ENCODE measurements at regions of chr5 and their contacts with region 1.

Region 1: GRCh38 chr5:176700239-176700847 is 53.1 kb downstream of the TSPAN17 start:
- DNase-seq: peak; percentile 85
- H3K4me3 ChIP-seq: no peak overlapping the region
- H3K27ac ChIP-seq: no peak overlapping the region
- H3K4me1 ChIP-seq: no peaks in the 10 kb centered on the region; a peak in 1 of 4 replicates
- H3K27me3 ChIP-seq: peaks cover 9% of the 10 kb centered on the region
- CTCF ChIP-seq: peak; percentile 31
- EP300 ChIP-seq: no peak
- RAD21 ChIP-seq: peak; percentile 79

Region 2: GRCh38 chr5:176466245-176466871 is 234.0 kb before region 1 on chr5:
- CTCF ChIA-PET with region 1: no interaction called
- POLR2A ChIA-PET with region 1: no interaction called
- DNase-seq: no peak
- H3K4me3 ChIP-seq: no peak overlapping the region
- H3K27ac ChIP-seq: peak overlapping the region in 1 of 2 experiments; percentile 35; a peak in 2 of 4 replicates
- H3K4me1 ChIP-seq: no peaks in the 10 kb centered on the region
- H3K27me3 ChIP-seq: no peaks in the 10 kb centered on the region
- CTCF ChIP-seq: no peak
- EP300 ChIP-seq: no peak
- RAD21 ChIP-seq: no peak

Region 3: GRCh38 chr5:176682016-176682531 is 18.3 kb before region 1 on chr5:
- CTCF ChIA-PET with region 1: interaction called, 12 read pairs
- POLR2A ChIA-PET with region 1: no interaction called
- DNase-seq: no peak
- H3K4me3 ChIP-seq: no peak overlapping the region
- H3K27ac ChIP-seq: no peak overlapping the region
- H3K4me1 ChIP-seq: no peaks in the 10 kb centered on the region
- H3K27me3 ChIP-seq: no peaks in the 10 kb centered on the region; the same call in 1 of the 2 replicates
- CTCF ChIP-seq: no peak
- EP300 ChIP-seq: no peak
- RAD21 ChIP-seq: no peak

Region 4: GRCh38 chr5:176716320-176716719 is 16.0 kb after region 1 on chr5:
- CTCF ChIA-PET with region 1: interaction called, 26 read pairs
- POLR2A ChIA-PET with region 1: no interaction called
- DNase-seq: peak; percentile 66
- H3K4me3 ChIP-seq: no peak overlapping the region
- H3K27ac ChIP-seq: no peak overlapping the region
- H3K4me1 ChIP-seq: peaks cover 8 to 9% of the 10 kb centered on the region in 2 experiments; a peak in 2 of 4 replicates
- H3K27me3 ChIP-seq: peaks cover 18% of the 10 kb centered on the region
- CTCF ChIP-seq: no peak
- EP300 ChIP-seq: peak; percentile 13 to 14; a peak in 1 of 4 replicates
- RAD21 ChIP-seq: no peak

Region 5: GRCh38 chr5:176739461-176740051 is 39.2 kb after region 1 on chr5:
- CTCF ChIA-PET with region 1: interaction called, 15 read pairs
- POLR2A ChIA-PET with region 1: no interaction called
- DNase-seq: peak; percentile 66
- H3K4me3 ChIP-seq: no peak overlapping the region
- H3K27ac ChIP-seq: peak overlapping the region in 1 of 2 experiments; percentile 78; a peak in 2 of 4 replicates
- H3K4me1 ChIP-seq: peaks cover 0 to 52% of the 10 kb centered on the region in 2 experiments; a peak in 2 of 4 replicates
- H3K27me3 ChIP-seq: no peaks in the 10 kb centered on the region; the same call in 1 of the 2 replicates
- CTCF ChIP-seq: no peak
- EP300 ChIP-seq: no peak
- RAD21 ChIP-seq: no peak

Region 6: GRCh38 chr5:176803940-176804498 is 103.7 kb after region 1 on chr5:
- CTCF ChIA-PET with region 1: interaction called, 10 read pairs
- POLR2A ChIA-PET with region 1: no interaction called
- DNase-seq: no peak
- H3K4me3 ChIP-seq: no peak overlapping the region
- H3K27ac ChIP-seq: peak overlapping the region in 1 of 2 experiments; percentile 85; a peak in 1 of 4 replicates
- H3K4me1 ChIP-seq: peaks cover 0 to 22% of the 10 kb centered on the region in 2 experiments; a peak in 1 of 4 replicates
- H3K27me3 ChIP-seq: peaks cover 5% of the 10 kb centered on the region; the same call in 1 of the 2 replicates
- CTCF ChIP-seq: no peak
- EP300 ChIP-seq: no peak
- RAD21 ChIP-seq: no peak

Region 7: DNA sequence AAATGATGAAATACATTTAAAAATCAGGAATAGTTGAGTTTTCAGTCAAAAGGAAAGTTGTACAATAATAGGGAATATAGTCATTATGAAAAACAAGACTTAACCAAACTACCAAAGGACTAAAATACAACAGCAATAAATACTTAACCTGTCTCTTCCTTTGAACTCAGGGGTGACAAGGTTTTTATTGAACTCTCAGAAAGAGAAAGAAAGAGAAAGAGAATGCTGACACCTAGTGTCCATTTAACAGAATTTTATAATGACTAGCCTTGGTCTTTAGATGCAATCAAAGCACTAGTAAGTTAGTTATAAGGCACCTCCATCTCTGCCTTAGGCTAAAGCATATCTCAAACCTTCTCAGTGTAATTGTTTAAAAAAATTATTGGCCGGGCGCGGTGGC is 258.7 kb after region 1 on chr5:
- CTCF ChIA-PET with region 1: interaction called, 16 read pairs
- POLR2A ChIA-PET with region 1: no interaction called
- DNase-seq: peak; percentile 54
- H3K4me3 ChIP-seq: no peak overlapping the region; a peak in 1 of 4 replicates
- H3K27ac ChIP-seq: no peak overlapping the region
- H3K4me1 ChIP-seq: peaks cover 7 to 8% of the 10 kb centered on the region in 2 experiments; a peak in 3 of 4 replicates
- H3K27me3 ChIP-seq: no peaks in the 10 kb centered on the region
- CTCF ChIP-seq: peak; percentile 64
- EP300 ChIP-seq: no peak
- RAD21 ChIP-seq: peak; percentile 80

Measured in SK-N-SH (cell line).